Breast epithelium (tissue), 4 donors: ENCODE measurements at regions of chr18 and their contacts with region 1.

Region 1: DNA sequence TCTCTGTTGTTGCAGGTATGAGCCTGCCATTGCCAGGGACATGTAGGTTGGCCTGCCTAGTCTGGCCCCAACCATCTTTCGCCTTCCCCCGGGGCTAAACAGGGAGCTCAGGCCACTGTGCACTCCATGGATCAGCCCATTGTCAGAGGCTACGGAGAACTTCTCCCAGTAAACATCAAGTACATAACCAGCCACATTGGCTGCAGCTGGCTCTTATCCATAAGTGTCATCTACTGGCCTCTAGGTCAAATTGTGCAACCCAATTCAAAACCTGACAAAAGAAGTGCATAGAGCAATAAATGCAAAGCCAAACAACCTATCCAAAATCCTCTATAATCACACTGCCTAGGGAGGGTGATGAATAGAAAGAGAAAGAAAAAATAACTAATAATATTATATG is 418.1 kb upstream of the DCC start:
- DNase-seq: no peak
- H3K4me3 ChIP-seq: no peak overlapping the region
- H3K27ac ChIP-seq: no peak overlapping the region
- H3K4me1 ChIP-seq: no peaks in the 10 kb centered on the region
- H3K27me3 ChIP-seq: no peaks in the 10 kb centered on the region
- CTCF ChIP-seq: no peak
- POLR2A ChIP-seq: no peak

Region 2: GRCh38 chr18:51588616-51589015 is 333.2 kb before region 1 on chr18:
- intact Hi-C with region 1: no loop called
- DNase-seq: no peak
- H3K4me3 ChIP-seq: no peak overlapping the region
- H3K27ac ChIP-seq: no peak overlapping the region
- H3K4me1 ChIP-seq: no peaks in the 10 kb centered on the region
- H3K27me3 ChIP-seq: no peaks in the 10 kb centered on the region
- CTCF ChIP-seq: no peak
- POLR2A ChIP-seq: no peak

Region 3: DNA sequence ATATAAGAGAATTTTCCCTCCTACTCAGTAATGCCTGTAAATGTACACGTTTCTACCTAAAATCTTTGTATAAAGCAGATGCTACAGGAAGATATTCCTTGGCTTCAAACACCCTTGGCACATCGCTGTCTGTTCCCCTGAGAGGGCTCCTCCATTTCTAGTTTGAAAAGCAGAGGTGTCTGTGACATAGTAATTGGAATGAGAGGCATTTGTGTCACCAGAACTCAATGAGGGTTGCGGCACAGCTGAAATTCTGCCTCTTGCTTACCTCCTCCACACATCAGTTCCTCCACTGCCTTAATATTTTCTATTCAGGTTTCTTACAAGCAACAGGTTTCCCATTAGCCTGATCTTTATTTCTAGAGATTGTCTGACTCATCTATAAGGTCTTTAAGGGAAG is 58.2 kb after region 1 on chr18:
- intact Hi-C with region 1: no loop called
- DNase-seq: no peak
- H3K4me3 ChIP-seq: no peak overlapping the region
- H3K27ac ChIP-seq: no peak overlapping the region
- H3K4me1 ChIP-seq: no peaks in the 10 kb centered on the region
- H3K27me3 ChIP-seq: no peaks in the 10 kb centered on the region
- CTCF ChIP-seq: no peak
- POLR2A ChIP-seq: no peak

Region 4: GRCh38 chr18:53715243-53715853 is 1793.5 kb after region 1 on chr18:
- intact Hi-C with region 1: loop called (anchors 10 kb)
- DNase-seq: no peak
- H3K4me3 ChIP-seq: no peak overlapping the region
- H3K27ac ChIP-seq: no peak overlapping the region
- H3K4me1 ChIP-seq: no peaks in the 10 kb centered on the region
- H3K27me3 ChIP-seq: no peaks in the 10 kb centered on the region
- CTCF ChIP-seq: no peak
- POLR2A ChIP-seq: no peak